ENCODE measurements at regions of chr17 and their contacts with region 1.

Region 1: GRCh38 chr17:31130286-31131224 is 35.8 kb downstream of the NF1 start:
- DNase-seq: peak; percentile 70 to 93 (median 81)
- ATAC-seq: peak; percentile 91 to 96 (median 95)
- H3K4me3 ChIP-seq: peak overlapping the region in 1 of 12 donors; percentile 4
- H3K27ac ChIP-seq: peak overlapping the region in 9 of 12 donors; percentile 17 to 70 (median 51)
- H3K4me1 ChIP-seq: peaks cover 0 to 33% (median 10%) of the 10 kb centered on the region in 12 donors
- H3K27me3 ChIP-seq: no peaks in the 10 kb centered on the region
- CTCF ChIP-seq: no peak
- POLR2A ChIP-seq: no peak

Region 2: GRCh38 chr17:31074772-31075555 is 55.6 kb before region 1 on chr17:
- intact Hi-C with region 1: loop called in 1 of 10 experiments (anchors 10 kb)
- DNase-seq: no peak
- ATAC-seq: no peak
- H3K4me3 ChIP-seq: no peak overlapping the region
- H3K27ac ChIP-seq: no peak overlapping the region
- H3K4me1 ChIP-seq: no peaks in the 10 kb centered on the region
- H3K27me3 ChIP-seq: no peaks in the 10 kb centered on the region
- CTCF ChIP-seq: no peak
- POLR2A ChIP-seq: no peak

Region 3: DNA sequence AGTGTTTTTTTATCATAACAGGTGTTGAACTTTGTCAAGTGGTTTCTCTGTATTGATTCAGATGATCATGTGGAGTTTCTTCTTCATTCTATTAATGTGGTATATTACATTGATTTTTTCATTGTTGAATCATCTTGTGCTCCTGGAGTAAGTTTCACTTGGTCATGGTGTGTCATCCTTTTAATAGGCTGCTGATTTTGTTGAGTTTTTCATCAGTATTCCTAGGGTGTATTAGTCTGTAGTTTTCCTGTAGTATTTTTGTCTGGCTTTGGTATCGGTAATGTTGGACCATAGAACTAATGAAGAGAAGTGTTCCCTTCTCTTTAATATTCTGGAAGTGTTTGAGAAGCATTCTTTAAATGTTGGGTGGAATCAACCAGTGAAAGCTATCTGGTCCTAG is 67.4 kb after region 1 on chr17:
- intact Hi-C with region 1: no loop called
- DNase-seq: no peak
- ATAC-seq: no peak
- H3K4me3 ChIP-seq: no peak overlapping the region
- H3K27ac ChIP-seq: no peak overlapping the region
- H3K4me1 ChIP-seq: peaks cover 0 to 17% (median 0%) of the 10 kb centered on the region in 12 donors
- H3K27me3 ChIP-seq: no peaks in the 10 kb centered on the region
- CTCF ChIP-seq: no peak
- POLR2A ChIP-seq: no peak

Region 4: DNA sequence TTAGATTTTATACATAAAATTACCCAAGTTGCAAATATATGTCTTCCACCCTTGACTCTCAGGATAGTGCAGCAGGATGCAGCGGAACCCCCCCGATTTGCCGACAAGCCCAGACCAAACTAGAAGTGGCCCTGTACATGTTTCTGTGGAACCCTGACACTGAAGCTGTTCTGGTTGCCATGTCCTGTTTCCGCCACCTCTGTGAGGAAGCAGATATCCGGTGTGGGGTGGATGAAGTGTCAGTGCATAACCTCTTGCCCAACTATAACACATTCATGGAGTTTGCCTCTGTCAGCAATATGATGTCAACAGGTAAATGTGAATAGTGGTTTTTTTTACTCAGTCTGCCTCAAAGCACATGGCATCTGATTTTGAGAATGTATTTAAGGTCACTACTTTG is 95.8 kb after region 1 on chr17:
- intact Hi-C with region 1: no loop called
- DNase-seq: peak in 1 of 5 donors; percentile 54
- ATAC-seq: no peak
- H3K4me3 ChIP-seq: no peak overlapping the region
- H3K27ac ChIP-seq: no peak overlapping the region
- H3K4me1 ChIP-seq: peaks cover 0 to 9% (median 0%) of the 10 kb centered on the region in 12 donors
- H3K27me3 ChIP-seq: no peaks in the 10 kb centered on the region
- CTCF ChIP-seq: no peak
- POLR2A ChIP-seq: no peak

Region 5: DNA sequence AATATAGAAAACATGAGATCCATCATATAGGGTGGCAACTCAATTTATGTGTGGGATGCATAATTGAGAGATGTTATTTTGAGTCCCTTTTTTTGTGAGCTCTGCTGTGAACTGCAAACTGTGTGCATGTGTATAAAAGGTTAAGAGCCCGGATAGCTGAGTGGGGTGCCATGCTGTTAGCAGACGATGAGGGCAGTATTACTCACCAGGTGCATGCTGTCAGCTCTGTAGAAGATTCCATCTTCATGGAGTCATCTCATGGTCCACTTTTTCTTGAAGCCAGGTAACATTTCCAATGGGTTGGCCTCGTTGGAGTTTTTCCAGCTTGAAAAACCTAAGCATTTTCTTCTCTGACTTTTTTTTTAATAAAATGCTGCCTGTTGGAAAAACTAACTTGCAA is 1092.1 kb after region 1 on chr17:
- intact Hi-C with region 1: no loop called
- DNase-seq: no peak
- ATAC-seq: no peak
- H3K4me3 ChIP-seq: no peak overlapping the region
- H3K27ac ChIP-seq: no peak overlapping the region
- H3K4me1 ChIP-seq: no peaks in the 10 kb centered on the region
- H3K27me3 ChIP-seq: no peaks in the 10 kb centered on the region
- CTCF ChIP-seq: no peak
- POLR2A ChIP-seq: no peak

Measured in heart left ventricle (tissue), 16 donors.